WTC11 (cell line): ENCODE measurements at regions of chr11 and their contacts with region 1.

Region 1: DNA sequence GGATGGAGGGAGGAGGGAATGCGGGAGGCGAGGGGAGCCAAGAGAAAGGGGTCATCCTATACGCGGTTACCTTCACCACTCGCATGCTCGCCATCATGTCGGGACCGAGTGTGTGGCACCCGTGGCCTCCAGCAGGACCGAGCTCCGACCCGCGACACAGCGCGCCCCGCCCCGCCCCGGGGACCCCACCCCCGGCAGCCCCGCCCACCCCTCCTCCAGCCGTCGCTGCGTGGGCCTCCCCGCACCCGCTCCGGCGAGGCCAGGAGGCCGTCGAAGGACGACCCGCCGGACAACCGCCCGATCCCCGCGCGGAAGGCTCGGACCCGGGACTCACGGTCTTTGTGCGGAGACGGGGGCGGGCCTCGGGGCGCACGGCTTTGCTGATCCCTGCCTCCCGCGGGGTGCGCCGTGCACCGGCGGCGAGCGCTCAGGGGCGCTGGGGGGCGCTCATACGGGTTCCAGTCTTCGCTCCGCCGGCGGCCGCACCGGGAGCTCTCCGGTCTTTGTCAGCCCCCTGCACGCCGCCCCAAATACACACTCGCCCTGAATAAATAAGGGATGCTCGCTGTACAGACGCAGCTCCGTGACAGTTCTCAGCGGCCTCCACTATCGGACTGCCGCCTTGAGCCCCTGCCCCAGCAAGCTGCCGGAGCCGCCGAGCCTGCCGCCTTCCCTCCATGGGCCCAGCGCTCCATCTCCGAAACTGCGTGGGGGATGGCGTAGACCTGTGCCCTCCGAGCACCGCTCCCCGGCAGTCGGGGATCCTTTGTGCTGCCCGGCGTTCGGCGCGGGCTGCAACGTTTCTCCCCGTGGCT is at the start of gene UBE2L6:
- DNase-seq: peak; percentile 91
- ATAC-seq: peak; percentile 82
- H3K4me3 Mint-ChIP-seq: peak within 1 kb of the TSS; percentile 95
- H3K27ac Mint-ChIP-seq: peak within 1 kb of the TSS; percentile 89
- H3K4me1 Mint-ChIP-seq: peaks cover 28% of the 10 kb centered on the region
- H3K27me3 Mint-ChIP-seq: peaks cover 7% of the 10 kb centered on the region
- CTCF ChIP-seq: no peak
- total RNA-seq, gene UBE2L6: 38.8 to 48.5 TPM (median 47.4 TPM) in 3 replicates

Region 2: DNA sequence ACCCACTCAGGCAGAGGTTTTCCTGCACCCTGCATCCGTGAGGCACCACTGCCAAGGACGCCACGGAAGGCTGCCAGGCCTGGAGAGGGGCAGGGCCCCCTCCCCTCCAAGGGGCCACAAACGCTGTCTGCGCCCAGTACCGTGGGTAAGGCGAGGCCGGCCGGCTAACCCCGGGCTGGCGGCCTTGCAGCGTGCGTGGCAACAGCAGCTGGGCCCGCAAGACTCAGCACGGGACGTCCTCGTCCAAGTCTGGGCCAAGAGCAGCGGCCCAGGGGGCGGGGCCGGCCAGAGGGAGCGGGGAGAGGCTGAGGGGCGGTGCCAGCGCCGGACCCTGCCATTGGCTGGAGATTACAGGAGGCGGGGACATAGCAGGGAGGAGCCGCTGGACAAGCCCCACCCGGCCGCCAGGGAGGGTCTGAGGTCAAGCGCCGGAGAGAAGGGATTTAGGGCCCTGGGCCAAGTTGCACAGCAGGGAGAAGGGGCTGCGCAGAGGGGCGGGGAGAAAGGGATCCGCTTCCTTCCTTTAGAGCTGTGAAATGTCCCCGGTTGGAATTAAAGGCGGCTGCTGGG is 68.2 kb before region 1 on chr11:
- CTCF ChIA-PET with region 1: interaction called, 10 read pairs
- POLR2A ChIA-PET with region 1: no interaction called
- DNase-seq: peak; percentile 99
- ATAC-seq: peak; percentile 100
- H3K4me3 Mint-ChIP-seq: peak overlapping the region; percentile 51
- H3K27ac Mint-ChIP-seq: peak overlapping the region; percentile 86; the same call in 1 of the 2 replicates
- H3K4me1 Mint-ChIP-seq: peaks cover 41% of the 10 kb centered on the region
- H3K27me3 Mint-ChIP-seq: no peaks in the 10 kb centered on the region; the same call in 1 of the 2 replicates
- CTCF ChIP-seq: no peak

Region 3: GRCh38 chr11:57597916-57598830 is 30.5 kb after region 1 on chr11:
- CTCF ChIA-PET with region 1: interaction called, 26 read pairs
- POLR2A ChIA-PET with region 1: interaction called, 21 read pairs
- DNase-seq: peak; percentile 89
- ATAC-seq: peak; percentile 84
- H3K4me3 Mint-ChIP-seq: peak overlapping the region; percentile 70
- H3K27ac Mint-ChIP-seq: peak overlapping the region; percentile 38
- H3K4me1 Mint-ChIP-seq: peaks cover 35% of the 10 kb centered on the region
- H3K27me3 Mint-ChIP-seq: no peaks in the 10 kb centered on the region
- CTCF ChIP-seq: no peak

Region 4: GRCh38 chr11:57604296-57605027 is 36.7 kb after region 1 on chr11:
- CTCF ChIA-PET with region 1: interaction called, 18 read pairs
- POLR2A ChIA-PET with region 1: no interaction called
- DNase-seq: no peak
- ATAC-seq: peak; percentile 32; the same call in 1 of the 2 replicates
- H3K4me3 Mint-ChIP-seq: no peak overlapping the region
- H3K27ac Mint-ChIP-seq: no peak overlapping the region
- H3K4me1 Mint-ChIP-seq: peaks cover 4% of the 10 kb centered on the region
- H3K27me3 Mint-ChIP-seq: no peaks in the 10 kb centered on the region
- CTCF ChIP-seq: no peak

Region 5: DNA sequence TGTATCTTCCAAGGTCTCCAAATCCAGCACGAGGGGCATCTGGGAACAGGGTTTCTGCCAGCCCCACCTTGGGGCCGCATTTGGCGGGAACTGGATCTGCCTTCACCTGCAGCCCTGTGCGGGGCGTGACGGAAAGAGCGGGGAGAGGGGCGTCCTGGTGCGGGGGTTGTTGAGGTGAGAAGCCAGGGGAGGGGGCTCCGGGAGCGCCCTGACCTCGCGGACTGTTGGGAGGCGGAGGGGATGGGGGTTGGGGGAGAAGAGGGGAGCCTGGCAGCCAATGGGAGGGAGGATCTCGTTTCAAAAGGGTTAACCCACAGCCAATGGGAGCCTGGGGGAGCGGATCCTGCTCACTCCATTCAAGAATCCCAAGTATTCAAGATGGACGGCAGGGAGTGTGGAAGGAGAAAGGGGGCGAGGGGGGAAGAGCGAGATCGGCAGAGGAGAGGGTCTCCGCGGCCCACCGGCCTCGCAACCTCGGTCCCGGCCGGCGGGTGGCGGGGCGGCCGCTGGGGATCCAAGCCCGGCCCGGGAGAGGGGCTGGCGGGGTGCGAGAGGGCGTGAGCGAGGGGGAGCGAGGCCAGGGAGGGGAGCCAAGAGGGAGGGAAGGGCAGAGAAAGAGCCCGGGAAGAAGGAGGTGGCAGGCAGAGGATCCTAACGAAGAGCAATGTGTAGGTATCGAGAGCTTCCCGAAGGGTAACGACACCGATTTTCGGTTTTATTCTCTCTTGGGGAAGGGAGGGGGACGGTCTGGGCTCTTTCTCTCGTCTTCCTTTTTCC is 70.5 kb after region 1 on chr11:
- CTCF ChIA-PET with region 1: interaction called, 363 read pairs
- POLR2A ChIA-PET with region 1: interaction called, 43 read pairs
- DNase-seq: peak; percentile 94
- ATAC-seq: peak; percentile 69
- H3K4me3 Mint-ChIP-seq: peak overlapping the region; percentile 96
- H3K27ac Mint-ChIP-seq: peak overlapping the region; percentile 99
- H3K4me1 Mint-ChIP-seq: peaks cover 48% of the 10 kb centered on the region
- H3K27me3 Mint-ChIP-seq: peaks cover 18% of the 10 kb centered on the region
- CTCF ChIP-seq: no peak

Region 6: DNA sequence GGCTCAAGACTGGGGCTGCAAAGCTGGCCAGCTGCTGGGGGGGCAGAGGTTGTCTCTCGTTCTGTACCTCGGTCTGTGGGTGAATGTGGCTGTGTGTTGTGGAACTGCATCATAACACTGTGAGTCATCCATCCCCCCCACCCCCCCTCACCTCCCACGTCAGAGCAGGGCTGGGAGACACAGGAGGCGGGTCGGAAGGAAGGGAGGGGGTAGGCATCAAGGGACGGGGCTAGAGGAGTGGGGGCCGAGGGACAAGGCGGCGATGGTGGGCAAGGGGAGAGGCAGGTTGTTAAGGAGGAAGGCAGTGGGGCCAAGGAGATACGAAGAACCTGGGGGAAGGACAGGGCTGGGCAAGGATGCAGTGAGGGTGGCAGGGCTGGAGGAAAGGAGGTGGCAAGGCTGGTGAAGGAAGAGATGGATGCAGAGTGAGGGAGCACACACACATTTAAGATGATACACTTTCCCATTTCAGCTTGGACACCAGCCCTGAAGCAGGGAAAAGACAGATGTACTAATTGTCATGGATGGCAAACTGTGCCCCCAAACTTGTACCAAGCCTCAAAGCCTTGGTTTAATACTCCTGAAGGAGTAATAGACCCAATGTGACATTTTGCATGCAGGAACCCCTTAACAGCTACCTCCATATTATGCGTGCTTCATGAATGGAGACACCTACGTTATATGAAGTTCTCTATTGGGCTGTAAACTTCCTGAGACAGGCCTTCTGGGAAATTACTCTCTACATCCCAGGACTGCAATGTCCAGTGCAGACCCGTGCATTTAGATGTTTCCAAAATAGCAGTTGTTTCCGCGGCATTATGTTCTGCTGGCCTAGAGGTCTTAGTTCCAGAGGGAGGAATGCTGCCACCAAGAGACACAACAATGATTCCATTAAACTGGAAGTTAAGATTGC is 82.4 kb after region 1 on chr11 and contains the start of gene YPEL4:
- CTCF ChIA-PET with region 1: interaction called, 363 read pairs
- POLR2A ChIA-PET with region 1: interaction called, 33 read pairs
- DNase-seq: peak; percentile 45
- ATAC-seq: peak; percentile 6
- H3K4me3 Mint-ChIP-seq: peak within 1 kb of the TSS; percentile 80
- H3K27ac Mint-ChIP-seq: peak within 1 kb of the TSS; percentile 18; the same call in 1 of the 2 replicates
- H3K4me1 Mint-ChIP-seq: peaks cover 73% of the 10 kb centered on the region
- H3K27me3 Mint-ChIP-seq: peaks cover 62% of the 10 kb centered on the region
- CTCF ChIP-seq: no peak
- total RNA-seq, gene YPEL4: 0.15 to 0.30 TPM in 2 of 3 replicates, not detected in the other